ENCODE measurements at regions of chr1 and their contacts with region 1.

Region 1: DNA sequence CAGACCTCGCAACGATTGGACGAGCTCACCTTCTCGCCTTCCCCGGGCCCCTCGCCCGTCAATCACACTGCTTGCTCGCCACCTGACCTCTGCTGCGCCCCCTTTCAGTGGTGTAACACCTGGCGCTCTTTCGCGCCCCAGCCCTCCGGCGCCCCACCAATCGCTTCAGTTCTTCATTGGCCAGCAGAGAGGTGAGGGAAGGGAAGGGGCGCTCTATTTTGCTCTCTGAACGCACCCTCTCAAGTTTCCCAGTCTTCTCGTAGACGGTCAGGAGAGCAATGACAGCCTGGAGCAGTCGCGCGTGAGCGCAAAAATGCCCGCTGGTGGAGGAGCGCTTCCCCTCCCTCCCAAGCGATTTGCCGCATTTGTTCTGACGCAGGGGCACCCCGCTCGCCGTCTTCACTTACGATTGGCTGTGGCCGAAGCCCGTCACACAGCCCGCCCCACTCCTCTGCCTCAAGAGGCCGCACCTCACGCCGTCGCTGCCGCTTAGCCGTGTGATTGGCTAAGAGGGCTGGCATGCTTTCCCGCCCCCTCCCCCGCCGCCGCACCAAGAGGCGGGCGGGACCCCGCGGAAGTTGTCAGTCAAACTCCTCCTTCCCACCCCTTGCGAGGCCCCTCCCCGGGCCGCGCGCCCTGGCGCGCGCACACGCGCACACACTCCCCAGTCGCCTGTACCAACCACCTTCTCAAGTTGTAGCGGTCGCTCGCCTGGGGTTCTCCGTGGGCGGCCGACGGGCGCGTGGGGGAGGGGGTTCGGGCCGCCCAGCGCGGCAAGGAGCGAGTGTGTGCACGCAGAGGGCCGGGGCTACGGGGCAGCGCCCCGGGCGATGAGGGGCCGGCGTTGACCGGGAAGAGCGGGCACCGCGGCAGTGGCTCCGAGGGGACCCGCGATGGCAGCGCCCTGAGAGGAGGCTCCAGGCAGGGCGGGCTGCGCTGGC is at the start of gene PPP2R5A:
- DNase-seq: peak; percentile 99
- ATAC-seq: peak; percentile 95
- total RNA-seq, gene PPP2R5A: 77.9 TPM

Region 2: GRCh38 chr1:212162635-212163034 is 122.4 kb before region 1 on chr1:
- intact Hi-C with region 1: loop called (anchors 10 kb)
- DNase-seq: peak; percentile 59
- ATAC-seq: peak; percentile 69

Region 3: GRCh38 chr1:212179394-212180076 is 105.5 kb before region 1 on chr1:
- intact Hi-C with region 1: no loop called
- DNase-seq: no peak
- ATAC-seq: no peak

Region 4: DNA sequence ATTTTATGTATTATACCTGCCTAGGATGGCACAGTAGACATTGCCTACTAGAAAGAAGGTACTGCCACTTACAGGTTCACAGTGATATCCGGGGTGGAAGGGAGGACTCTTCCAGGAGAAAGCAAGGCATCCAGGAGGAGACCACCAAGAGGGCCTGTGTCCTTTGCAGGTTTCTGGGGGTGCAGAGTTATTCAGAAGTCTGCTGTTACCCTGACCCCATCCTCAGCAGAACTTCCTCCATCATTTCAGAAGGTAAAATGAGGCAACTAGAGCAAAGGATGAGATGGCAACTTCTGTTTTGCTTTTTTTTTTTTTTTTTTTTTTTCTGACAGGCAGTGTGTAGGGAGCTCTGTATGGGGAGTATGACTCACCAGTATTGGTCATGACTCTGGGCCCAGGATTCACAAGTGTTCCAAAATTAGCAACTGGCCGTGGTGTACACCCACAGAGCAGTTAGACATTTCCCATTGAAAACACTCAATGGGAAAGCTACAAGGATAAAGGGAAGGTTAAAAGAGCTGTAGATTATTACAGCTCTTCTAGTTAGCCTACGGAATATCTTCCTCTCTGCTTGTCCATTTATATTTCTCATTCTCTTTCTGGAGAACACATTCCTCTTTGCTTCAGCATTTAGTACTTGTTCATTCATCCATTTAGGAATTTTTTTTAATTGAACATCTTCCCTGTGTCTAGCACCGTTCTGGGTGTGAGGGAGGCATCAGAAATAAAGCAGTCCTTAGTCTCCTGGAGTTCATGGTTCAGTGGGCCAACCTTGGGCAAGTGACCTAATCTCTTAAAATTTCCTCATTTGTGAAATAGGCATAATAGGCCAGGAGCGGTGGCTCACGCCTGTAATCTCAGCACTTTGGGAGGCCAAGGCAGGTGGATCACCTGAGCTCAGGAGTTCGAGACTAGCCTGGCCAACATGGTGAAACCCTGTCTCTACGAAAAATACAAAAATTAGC is 50.3 kb before region 1 on chr1:
- intact Hi-C with region 1: loop called (anchors 5 kb)
- DNase-seq: no peak
- ATAC-seq: peak; percentile 95

Region 5: DNA sequence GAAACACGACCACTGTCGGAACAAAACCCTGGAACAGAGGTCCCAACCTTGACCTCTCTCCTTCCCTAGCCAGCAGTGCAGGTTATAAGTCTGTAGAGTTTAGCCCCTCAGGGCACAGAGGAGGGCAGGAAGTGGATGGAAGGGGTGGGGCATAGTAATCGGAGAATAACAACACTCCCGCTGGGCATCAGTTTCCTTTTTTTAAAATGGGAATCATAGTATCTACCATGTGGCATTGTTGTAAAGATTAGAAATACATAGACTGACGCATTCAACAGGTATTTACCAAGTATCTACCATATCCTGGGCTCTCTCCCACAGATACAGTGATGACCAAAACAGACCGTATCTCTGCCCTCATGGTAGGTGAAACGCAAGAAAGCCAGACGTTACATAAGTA is 298.6 kb after region 1 on chr1:
- intact Hi-C with region 1: no loop called
- DNase-seq: no peak
- ATAC-seq: no peak

Region 6: GRCh38 chr1:212608209-212608955 is 323.4 kb after region 1 on chr1 and contains the start of gene ATF3:
- intact Hi-C with region 1: no loop called
- DNase-seq: peak; percentile 100
- ATAC-seq: peak; percentile 95
- total RNA-seq, gene ATF3: 15.4 TPM